ENCODE measurements at regions of chr2 and their contacts with region 1.

Region 1: DNA sequence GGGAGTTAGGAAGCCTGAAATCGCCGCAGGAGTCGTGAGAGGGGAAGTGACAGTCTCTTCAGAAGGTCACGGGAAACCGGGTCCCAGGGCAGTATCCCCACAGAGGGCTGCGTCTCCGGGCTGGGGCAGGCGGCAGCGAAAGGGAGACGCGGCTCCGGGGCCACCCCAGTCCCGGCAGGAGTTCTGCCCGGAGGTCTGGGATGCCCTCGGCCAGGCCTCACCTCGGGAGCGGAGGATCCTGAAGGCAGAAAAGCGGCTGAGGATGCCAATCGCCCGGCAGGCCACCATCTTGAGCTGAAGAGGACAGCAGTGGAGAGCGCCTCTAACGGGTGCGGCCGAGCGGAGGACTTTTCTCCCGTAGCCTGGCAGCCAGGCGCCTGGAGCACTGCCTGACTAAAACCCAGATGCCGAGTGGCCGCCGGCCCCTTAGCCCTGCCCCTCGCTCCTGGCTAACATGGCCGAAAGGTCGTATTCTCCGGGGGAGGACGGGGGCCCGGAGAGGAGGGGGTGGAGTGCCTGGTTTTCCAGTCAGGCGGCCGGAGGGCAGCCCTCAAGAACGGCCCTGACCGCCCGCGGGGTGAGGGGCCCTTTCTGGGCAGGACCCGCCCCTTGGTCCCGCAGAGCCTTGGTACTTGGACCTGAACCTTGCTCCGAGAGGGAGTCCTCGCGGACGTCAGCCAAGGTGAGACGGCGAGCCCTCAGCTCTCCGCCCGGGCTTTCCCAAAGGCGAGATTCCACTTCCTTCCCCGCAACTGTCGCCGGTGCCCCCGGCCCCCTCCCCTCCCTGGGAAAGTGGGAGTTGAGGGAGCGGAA is at the starts of genes HADHA and HADHB:
- DNase-seq: peak; percentile 97 to 98
- H3K4me3 ChIP-seq: peak within 1 kb of the TSS; percentile 94
- H3K4me3 Mint-ChIP-seq: peak within 1 kb of the TSS; percentile 99
- H3K27ac Mint-ChIP-seq: peak within 1 kb of the TSS; percentile 97
- H3K4me1 ChIP-seq: peaks cover 7% of the 10 kb centered on the region; the same call in 1 of the 2 replicates
- H3K4me1 Mint-ChIP-seq: peaks cover 12% of the 10 kb centered on the region
- H3K27me3 ChIP-seq: no peaks in the 10 kb centered on the region
- H3K27me3 Mint-ChIP-seq: no peaks in the 10 kb centered on the region
- CTCF ChIP-seq: peak in 1 of 2 experiments; percentile 27
- total RNA-seq, gene HADHA: 143 and 150 TPM in 2 replicates
- total RNA-seq, gene HADHB: 93.2 and 106 TPM in 2 replicates

Region 2: GRCh38 chr2:26157580-26157979 is 86.9 kb before region 1 on chr2:
- CTCF ChIA-PET with region 1: no interaction called
- POLR2A ChIA-PET with region 1: no interaction called
- intact Hi-C with region 1: no loop called
- DNase-seq: no peak
- H3K4me3 ChIP-seq: no peak overlapping the region
- H3K4me3 Mint-ChIP-seq: no peak overlapping the region
- H3K27ac Mint-ChIP-seq: no peak overlapping the region
- H3K4me1 ChIP-seq: no peaks in the 10 kb centered on the region
- H3K4me1 Mint-ChIP-seq: no peaks in the 10 kb centered on the region
- H3K27me3 ChIP-seq: no peaks in the 10 kb centered on the region
- H3K27me3 Mint-ChIP-seq: no peaks in the 10 kb centered on the region
- CTCF ChIP-seq: no peak

Region 3: DNA sequence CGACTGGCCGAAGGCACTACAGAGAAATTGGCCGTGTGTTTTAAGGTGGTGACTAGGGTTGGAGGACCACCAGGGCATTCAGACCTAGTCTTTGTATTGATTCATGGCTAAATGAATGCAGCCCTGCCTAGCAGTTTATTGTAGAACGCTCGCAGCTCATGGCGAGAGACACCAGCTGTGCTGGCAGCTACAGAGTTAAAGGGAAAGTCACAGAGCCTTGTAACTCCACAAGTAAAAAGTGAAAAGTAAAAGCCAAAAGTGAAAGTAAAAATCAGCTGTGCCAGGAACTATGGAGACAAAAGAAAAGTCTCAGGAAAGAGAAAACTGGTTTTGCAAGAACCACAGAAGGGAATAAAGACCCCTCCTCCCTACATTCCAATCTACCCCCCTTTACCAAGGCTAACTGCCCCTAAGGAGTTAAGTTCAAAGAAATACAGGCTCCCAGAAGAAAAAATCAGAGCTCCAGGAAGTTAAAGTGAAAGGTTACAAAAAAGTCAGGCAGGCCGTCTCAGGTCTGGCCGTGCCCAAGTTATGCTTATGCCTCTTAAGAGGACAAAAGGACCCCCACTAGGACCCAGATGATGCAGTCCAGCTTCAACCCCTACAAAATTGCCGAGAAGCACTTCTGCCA is 55.1 kb after region 1 on chr2:
- CTCF ChIA-PET with region 1: no interaction called
- POLR2A ChIA-PET with region 1: interaction called, 4 read pairs
- intact Hi-C with region 1: loop called (anchors 1 kb)
- DNase-seq: peak in 1 of 2 experiments; percentile 55
- H3K4me3 ChIP-seq: no peak overlapping the region; the same call in 1 of the 2 replicates
- H3K4me3 Mint-ChIP-seq: no peak overlapping the region
- H3K27ac Mint-ChIP-seq: no peak overlapping the region
- H3K4me1 ChIP-seq: peaks cover 15% of the 10 kb centered on the region; the same call in 1 of the 2 replicates
- H3K4me1 Mint-ChIP-seq: peaks cover 7% of the 10 kb centered on the region
- H3K27me3 ChIP-seq: no peaks in the 10 kb centered on the region
- H3K27me3 Mint-ChIP-seq: no peaks in the 10 kb centered on the region
- CTCF ChIP-seq: no peak

Region 4: GRCh38 chr2:26330113-26330549 is 85.6 kb after region 1 on chr2:
- CTCF ChIA-PET with region 1: no interaction called
- POLR2A ChIA-PET with region 1: no interaction called
- intact Hi-C with region 1: loop called (anchors 2 kb)
- DNase-seq: peak; percentile 85 to 91
- H3K4me3 ChIP-seq: no peak overlapping the region
- H3K4me3 Mint-ChIP-seq: no peak overlapping the region
- H3K27ac Mint-ChIP-seq: no peak overlapping the region
- H3K4me1 ChIP-seq: no peaks in the 10 kb centered on the region
- H3K4me1 Mint-ChIP-seq: peaks cover 13% of the 10 kb centered on the region
- H3K27me3 ChIP-seq: no peaks in the 10 kb centered on the region
- H3K27me3 Mint-ChIP-seq: no peaks in the 10 kb centered on the region
- CTCF ChIP-seq: peak; percentile 84 to 95

Region 5: GRCh38 chr2:26345545-26346453 is 101.3 kb after region 1 on chr2 and contains the start of gene SELENOI:
- CTCF ChIA-PET with region 1: no interaction called
- POLR2A ChIA-PET with region 1: interaction called, 11 read pairs
- intact Hi-C with region 1: loop called (anchors 2 kb)
- DNase-seq: peak; percentile 99 to 100
- H3K4me3 ChIP-seq: peak within 1 kb of the TSS; percentile 66
- H3K4me3 Mint-ChIP-seq: peak within 1 kb of the TSS; percentile 100
- H3K27ac Mint-ChIP-seq: peak within 1 kb of the TSS; percentile 100
- H3K4me1 ChIP-seq: peaks cover 29% of the 10 kb centered on the region
- H3K4me1 Mint-ChIP-seq: peaks cover 26% of the 10 kb centered on the region
- H3K27me3 ChIP-seq: no peaks in the 10 kb centered on the region
- H3K27me3 Mint-ChIP-seq: no peaks in the 10 kb centered on the region
- CTCF ChIP-seq: no peak
- total RNA-seq, gene SELENOI: 61.3 and 68.9 TPM in 2 replicates